Heart right ventricle (tissue), 16 donors: ENCODE measurements at regions of chr3 and their contacts with region 1.

Region 1: DNA sequence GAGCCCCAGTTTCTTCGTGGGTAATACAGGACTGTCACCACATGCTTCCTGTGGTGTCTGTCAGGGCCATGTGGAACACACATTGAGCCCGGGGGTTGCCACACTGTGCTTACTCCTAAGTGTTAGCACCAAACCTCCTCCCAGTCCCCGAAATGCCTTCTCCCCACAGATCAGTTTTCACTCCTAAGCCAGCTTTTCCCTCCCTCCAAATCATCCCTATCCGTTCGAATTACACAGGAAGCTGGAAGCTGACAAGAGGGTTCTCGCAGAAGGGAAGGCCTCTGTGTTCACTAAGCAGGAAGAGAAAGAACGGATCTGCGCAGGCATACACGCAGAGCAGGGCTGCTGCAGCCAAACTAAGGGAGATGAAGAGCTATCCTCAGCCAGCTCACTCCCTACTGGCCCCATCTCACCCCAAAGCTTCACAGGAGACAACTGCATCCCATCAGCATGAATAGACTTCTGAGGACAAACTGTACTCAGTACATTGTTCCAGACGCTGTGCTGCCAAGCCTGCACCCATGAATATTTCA is 32.3 kb downstream of the XXYLT1 start:
- DNase-seq: peak in 1 of 2 donors; percentile 24
- ATAC-seq: peak; percentile 11 to 90 (median 78)
- H3K4me3 ChIP-seq: no peak overlapping the region
- H3K27ac ChIP-seq: peak overlapping the region in 6 of 10 donors; percentile 13 to 64 (median 42)
- H3K4me1 ChIP-seq: peaks cover 0 to 31% (median 20%) of the 10 kb centered on the region in 9 donors
- H3K27me3 ChIP-seq: no peaks in the 10 kb centered on the region
- CTCF ChIP-seq: no peak

Region 2: GRCh38 chr3:195178124-195178775 is 60.4 kb before region 1 on chr3:
- intact Hi-C with region 1: loop called in 1 of 10 experiments (anchors 10 kb)
- DNase-seq: peak; percentile 56 to 65
- ATAC-seq: peak; percentile 37 to 71 (median 48)
- H3K4me3 ChIP-seq: peak overlapping the region in 4 of 10 donors; percentile 11 to 28 (median 18)
- H3K27ac ChIP-seq: peak overlapping the region in 9 of 10 donors; percentile 71 to 90 (median 81)
- H3K4me1 ChIP-seq: peaks cover 26 to 77% (median 62%) of the 10 kb centered on the region in 9 donors
- H3K27me3 ChIP-seq: no peaks in the 10 kb centered on the region
- CTCF ChIP-seq: no peak

Region 3: GRCh38 chr3:195197765-195198425 is 40.8 kb before region 1 on chr3:
- intact Hi-C with region 1: loop called in 1 of 10 experiments (anchors 5 kb)
- DNase-seq: no peak
- ATAC-seq: peak in 1 of 8 donors; percentile 11
- H3K4me3 ChIP-seq: no peak overlapping the region
- H3K27ac ChIP-seq: no peak overlapping the region
- H3K4me1 ChIP-seq: peaks cover 0 to 35% (median 11%) of the 10 kb centered on the region in 9 donors
- H3K27me3 ChIP-seq: no peaks in the 10 kb centered on the region
- CTCF ChIP-seq: no peak

Region 4: GRCh38 chr3:195839282-195840010 is 600.8 kb after region 1 on chr3:
- intact Hi-C with region 1: no loop called
- DNase-seq: no peak
- ATAC-seq: peak in 2 of 8 donors; percentile 31 to 34
- H3K4me3 ChIP-seq: no peak overlapping the region
- H3K27ac ChIP-seq: no peak overlapping the region
- H3K4me1 ChIP-seq: peaks cover 0 to 3% (median 0%) of the 10 kb centered on the region in 9 donors
- H3K27me3 ChIP-seq: peaks cover 0 to 24% (median 12%) of the 10 kb centered on the region in 7 donors
- CTCF ChIP-seq: no peak